ENCODE measurements at regions of chr10 and their contacts with region 1.

Region 1: DNA sequence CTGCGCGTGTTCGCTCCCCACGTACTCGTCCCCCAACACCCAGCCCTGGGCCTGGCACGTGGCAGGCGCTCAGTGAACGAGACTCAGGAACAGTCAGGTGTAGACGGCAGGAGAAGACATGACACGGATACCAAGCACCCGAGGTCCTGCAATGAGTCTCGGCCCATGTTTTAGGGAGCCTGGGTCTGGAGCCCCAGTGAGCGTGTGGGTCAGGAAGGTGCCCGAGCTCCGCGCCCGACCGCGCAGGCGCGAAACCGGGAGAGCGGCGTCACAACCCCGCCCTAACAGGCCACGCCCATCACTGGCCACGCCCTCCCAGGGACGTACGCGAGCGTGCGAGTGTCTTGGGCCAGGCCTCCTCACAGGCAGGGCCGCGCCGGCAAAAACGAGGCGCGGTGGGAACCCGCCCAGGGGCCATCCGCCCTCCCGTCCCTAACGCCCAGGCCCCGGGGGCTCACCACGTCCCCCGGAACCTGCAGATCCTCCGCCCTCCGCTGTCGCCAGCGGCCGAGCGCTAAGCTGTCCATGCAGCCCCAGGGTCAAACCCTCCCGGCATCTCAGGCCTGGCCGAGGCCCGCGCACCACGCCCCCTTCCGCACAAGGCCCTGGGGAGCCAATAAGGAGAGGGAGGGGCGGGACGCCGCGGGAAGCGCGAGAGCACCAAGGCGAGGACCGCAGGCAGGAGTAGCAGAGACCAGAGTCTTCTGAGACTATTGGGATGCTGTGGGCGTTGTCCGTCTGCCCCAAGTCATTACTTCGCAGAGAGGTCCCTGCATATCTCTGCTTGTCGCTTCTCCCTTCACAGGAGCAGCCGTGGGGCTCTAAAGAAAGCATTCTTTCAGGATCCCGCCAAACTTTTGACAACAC is at the start of gene C10orf143:
- DNase-seq: peak; percentile 100
- ATAC-seq: peak; percentile 78
- H3K4me3 Mint-ChIP-seq: peak within 1 kb of the TSS; percentile 99
- H3K27ac Mint-ChIP-seq: peak within 1 kb of the TSS; percentile 99
- H3K4me1 Mint-ChIP-seq: peaks cover 43% of the 10 kb centered on the region
- H3K27me3 Mint-ChIP-seq: no peaks in the 10 kb centered on the region
- CTCF ChIP-seq: no peak
- total RNA-seq, gene C10orf143: 7.8 and 10.1 TPM in 2 replicates

Region 2: GRCh38 chr10:128211953-128212727 is 1898.3 kb before region 1 on chr10:
- CTCF ChIA-PET with region 1: interaction called, 4 read pairs
- POLR2A ChIA-PET with region 1: no interaction called
- intact Hi-C with region 1: loop called (anchors 5 kb)
- DNase-seq: peak; percentile 82
- ATAC-seq: peak; percentile 90
- H3K4me3 Mint-ChIP-seq: peak overlapping the region; percentile 80
- H3K27ac Mint-ChIP-seq: peak overlapping the region; percentile 56
- H3K4me1 Mint-ChIP-seq: peaks cover 11% of the 10 kb centered on the region
- H3K27me3 Mint-ChIP-seq: peaks cover 9% of the 10 kb centered on the region
- CTCF ChIP-seq: peak; percentile 74

Region 3: DNA sequence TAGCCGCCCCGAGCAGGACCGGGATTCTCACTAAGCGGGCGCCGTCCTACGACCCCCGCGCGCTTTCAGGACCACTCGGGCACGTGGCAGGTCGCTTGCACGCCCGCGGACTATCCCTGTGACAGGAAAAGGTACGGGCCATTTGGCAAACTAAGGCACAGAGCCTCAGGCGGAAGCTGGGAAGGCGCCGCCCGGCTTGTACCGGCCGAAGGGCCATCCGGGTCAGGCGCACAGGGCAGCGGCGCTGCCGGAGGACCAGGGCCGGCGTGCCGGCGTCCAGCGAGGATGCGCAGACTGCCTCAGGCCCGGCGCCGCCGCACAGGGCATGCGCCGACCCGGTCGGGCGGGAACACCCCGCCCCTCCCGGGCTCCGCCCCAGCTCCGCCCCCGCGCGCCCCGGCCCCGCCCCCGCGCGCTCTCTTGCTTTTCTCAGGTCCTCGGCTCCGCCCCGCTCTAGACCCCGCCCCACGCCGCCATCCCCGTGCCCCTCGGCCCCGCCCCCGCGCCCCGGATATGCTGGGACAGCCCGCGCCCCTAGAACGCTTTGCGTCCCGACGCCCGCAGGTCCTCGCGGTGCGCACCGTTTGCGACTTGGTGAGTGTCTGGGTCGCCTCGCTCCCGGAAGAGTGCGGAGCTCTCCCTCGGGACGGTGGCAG is 643.6 kb before region 1 on chr10 and contains the start of gene MGMT:
- CTCF ChIA-PET with region 1: interaction called, 4 read pairs
- POLR2A ChIA-PET with region 1: interaction called, 20 read pairs
- intact Hi-C with region 1: loop called (anchors 1 kb)
- DNase-seq: peak; percentile 97
- ATAC-seq: peak; percentile 99
- H3K4me3 Mint-ChIP-seq: peak within 1 kb of the TSS; percentile 81
- H3K27ac Mint-ChIP-seq: peak within 1 kb of the TSS; percentile 82
- H3K4me1 Mint-ChIP-seq: peaks cover 12% of the 10 kb centered on the region
- H3K27me3 Mint-ChIP-seq: no peaks in the 10 kb centered on the region
- CTCF ChIP-seq: no peak
- total RNA-seq, gene MGMT: 22.5 and 25.8 TPM in 2 replicates

Region 4: GRCh38 chr10:129963641-129964501 is 146.6 kb before region 1 on chr10 and contains the start of gene EBF3:
- CTCF ChIA-PET with region 1: no interaction called
- POLR2A ChIA-PET with region 1: no interaction called
- intact Hi-C with region 1: loop called (anchors 5 kb)
- DNase-seq: no peak
- ATAC-seq: peak; percentile 64
- H3K4me3 Mint-ChIP-seq: peak within 1 kb of the TSS; percentile 74
- H3K27ac Mint-ChIP-seq: no peak within 1 kb of the TSS
- H3K4me1 Mint-ChIP-seq: peaks cover 17% of the 10 kb centered on the region
- H3K27me3 Mint-ChIP-seq: peaks cover 43% of the 10 kb centered on the region
- CTCF ChIP-seq: no peak
- total RNA-seq, gene EBF3: not detected in 2 replicates

Region 5: DNA sequence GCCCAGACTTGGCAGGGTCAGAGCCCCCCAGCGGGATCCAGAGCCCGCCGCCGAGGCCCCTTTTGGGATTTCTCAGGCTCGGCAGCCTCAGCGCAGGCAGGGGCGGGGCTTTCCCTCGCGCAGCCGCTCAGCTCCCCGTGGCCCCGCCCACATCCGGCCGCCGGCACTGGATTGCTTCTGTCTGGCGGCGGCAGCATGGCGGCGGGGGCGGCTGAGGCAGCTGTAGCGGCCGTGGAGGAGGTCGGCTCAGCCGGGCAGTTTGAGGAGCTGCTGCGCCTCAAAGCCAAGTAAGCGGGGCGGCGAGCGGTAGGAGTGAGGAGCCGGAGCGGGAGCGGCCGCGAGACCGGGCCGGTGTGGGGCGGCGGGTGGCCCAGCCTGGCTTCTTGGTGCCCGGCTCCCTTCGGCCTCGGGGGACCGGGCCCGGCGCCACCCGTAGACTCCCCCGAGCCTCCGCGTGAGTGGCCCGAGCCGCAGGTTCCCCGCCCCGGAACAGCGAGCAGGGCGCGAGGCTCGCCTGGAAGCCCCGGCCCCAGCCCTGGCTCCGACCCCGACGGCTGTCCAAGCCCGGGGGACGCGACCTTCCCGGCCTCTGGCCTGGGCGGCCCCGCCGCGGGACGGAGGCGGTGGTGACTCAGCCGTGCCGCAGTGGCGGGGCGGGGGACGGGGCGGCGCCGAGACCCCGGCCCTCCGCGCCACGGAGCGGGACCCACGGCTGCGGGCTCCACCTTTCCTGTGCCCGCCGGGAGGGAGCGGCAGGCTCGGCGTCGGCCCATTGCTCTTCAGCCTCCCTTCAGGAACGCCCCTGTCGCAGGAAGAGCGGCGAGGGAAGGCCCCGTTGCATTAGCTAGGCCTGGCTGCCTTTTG is 26.0 kb after region 1 on chr10 and contains the start of gene GLRX3:
- CTCF ChIA-PET with region 1: interaction called, 31 read pairs
- POLR2A ChIA-PET with region 1: interaction called, 185 read pairs
- intact Hi-C with region 1: loop called (anchors 1 kb)
- DNase-seq: peak; percentile 91
- ATAC-seq: peak; percentile 88
- H3K4me3 Mint-ChIP-seq: peak within 1 kb of the TSS; percentile 93
- H3K27ac Mint-ChIP-seq: peak within 1 kb of the TSS; percentile 88
- H3K4me1 Mint-ChIP-seq: peaks cover 44% of the 10 kb centered on the region
- H3K27me3 Mint-ChIP-seq: peaks cover 6% of the 10 kb centered on the region
- CTCF ChIP-seq: no peak
- total RNA-seq, gene GLRX3: 80.6 and 85.0 TPM in 2 replicates

Region 6: DNA sequence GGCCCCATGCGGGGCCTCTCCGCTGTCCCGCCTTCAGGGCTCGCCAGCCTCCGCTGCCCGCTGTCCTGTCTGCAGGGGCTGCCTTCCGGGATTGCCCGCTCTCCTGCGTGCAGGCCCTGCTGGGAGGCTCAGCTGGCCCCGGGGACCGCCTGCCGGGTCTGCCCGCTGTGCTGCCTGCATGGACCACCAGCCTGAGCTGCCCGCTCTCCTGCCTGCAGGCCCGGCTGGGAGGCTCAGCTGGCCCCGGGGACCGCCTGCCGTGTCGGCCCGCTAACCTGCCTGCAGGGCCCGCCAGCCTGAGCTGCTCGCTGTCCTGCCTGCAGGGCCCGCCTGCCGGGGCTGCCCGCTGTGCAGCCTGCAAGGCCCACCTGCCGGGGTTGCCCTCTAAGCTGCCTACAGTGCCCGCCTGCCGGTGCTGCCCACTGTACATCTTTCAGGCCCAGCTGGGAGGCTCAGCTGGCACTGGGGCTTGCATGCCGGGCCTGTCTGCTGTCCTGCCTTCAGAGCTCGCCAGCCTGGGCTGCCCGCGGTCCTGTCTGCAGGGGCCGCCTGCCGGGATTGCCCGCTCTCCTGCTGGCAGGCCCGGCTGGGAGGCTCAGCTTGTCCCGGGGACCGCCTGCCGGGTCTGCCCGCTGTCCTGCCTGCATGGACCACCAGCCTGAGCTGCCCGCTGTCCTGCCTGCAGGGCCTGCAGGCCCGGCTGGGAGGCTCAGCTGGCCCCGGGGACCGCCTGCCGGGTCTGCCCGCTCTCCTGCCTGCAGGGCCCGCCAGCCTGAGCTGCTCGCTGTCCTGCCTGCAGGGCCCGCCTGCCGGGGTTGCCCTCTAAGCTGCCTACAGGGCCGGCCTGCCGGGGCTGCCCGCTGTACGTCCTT is 190.8 kb after region 1 on chr10:
- CTCF ChIA-PET with region 1: interaction called, 3 read pairs
- POLR2A ChIA-PET with region 1: interaction called, 22 read pairs
- intact Hi-C with region 1: no loop called
- DNase-seq: peak; percentile 59
- ATAC-seq: peak; percentile 71
- H3K4me3 Mint-ChIP-seq: peak overlapping the region; percentile 64
- H3K27ac Mint-ChIP-seq: peak overlapping the region; percentile 54
- H3K4me1 Mint-ChIP-seq: peaks cover 9% of the 10 kb centered on the region
- H3K27me3 Mint-ChIP-seq: no peaks in the 10 kb centered on the region
- CTCF ChIP-seq: no peak